Calu3 (cell line): ENCODE measurements at regions of chr2 and their contacts with region 1.

Region 1: DNA sequence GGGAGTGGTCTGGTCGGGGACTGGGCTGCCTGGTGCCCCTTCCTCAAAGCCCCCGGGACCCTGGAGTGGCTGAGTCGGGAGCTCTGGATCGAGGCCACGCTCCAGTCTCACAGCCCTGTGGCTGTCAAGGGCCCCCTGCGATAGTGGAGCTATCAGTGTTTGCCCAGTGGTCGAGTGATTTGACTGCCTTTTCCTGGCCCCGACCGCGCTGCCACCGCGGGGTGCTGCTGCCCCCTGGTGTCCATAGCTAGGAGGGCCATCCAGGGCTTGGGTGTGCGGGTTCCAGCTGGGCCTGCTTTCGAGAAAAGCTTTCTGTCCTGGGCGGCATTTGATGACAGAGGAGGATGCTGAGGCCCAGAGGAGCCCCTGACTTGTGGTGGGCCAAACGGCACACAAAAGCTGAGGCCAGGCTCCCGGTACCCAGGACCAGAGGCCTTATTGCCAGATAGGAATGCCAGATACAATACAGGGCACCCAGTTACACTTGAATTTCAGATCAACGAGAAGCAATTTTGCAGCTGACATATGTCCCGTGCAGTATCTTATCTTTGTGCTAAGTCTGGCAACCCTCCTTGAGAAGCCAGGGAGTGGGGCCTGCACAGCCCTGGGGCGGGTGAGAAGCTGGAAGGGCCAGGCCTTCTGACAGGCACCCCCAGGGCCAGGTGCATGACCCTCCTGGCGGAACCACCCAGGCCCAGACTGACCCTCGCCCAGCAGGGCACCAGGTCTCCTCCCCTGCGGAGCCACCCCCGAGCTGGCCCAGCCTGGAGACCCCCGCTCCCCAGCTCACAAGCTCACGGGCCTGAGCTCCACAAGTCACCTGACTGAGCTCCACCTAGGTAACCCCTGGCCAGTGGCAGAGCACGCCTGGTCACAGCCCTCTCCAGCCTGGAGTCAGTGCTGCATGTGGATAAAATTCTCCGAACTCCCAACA is 13.0 kb downstream of the ODC1 start:
- DNase-seq: peak; percentile 86
- H3K4me3 Mint-ChIP-seq: no peak overlapping the region
- H3K27ac Mint-ChIP-seq: no peak overlapping the region
- H3K4me1 Mint-ChIP-seq: peaks cover 18% of the 10 kb centered on the region
- H3K27me3 Mint-ChIP-seq: no peaks in the 10 kb centered on the region
- CTCF ChIP-seq: peak; percentile 95

Region 2: DNA sequence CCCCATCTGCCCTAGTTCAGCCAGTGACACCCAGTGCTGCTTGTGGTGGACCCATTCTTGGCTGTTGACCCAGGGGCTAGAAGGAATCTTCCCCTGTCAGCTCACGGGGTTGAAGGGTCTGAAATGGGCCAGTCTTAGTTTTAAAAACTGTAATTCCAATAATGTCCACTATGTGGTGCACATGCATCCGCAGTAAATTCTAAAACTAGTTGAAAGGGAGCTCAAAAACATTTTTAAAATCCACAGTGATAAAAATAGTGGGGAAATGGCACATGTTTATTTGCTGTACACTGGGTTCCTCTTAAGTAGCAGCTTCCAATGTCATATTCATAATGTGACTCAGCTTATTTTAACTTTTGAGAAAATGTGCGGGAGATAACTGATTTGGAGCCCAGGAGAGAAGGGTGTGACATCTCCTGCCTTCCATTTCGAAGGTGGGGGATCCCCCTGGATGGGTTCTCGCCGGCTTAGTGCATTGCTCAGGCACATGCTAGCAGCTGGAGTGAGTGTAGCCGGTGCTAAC is 450.9 kb before region 1 on chr2:
- CTCF ChIA-PET with region 1: interaction called, 11 read pairs
- intact Hi-C with region 1: no loop called
- DNase-seq: no peak
- H3K4me3 Mint-ChIP-seq: no peak overlapping the region
- H3K27ac Mint-ChIP-seq: no peak overlapping the region
- H3K4me1 Mint-ChIP-seq: peaks cover 5% of the 10 kb centered on the region
- H3K27me3 Mint-ChIP-seq: no peaks in the 10 kb centered on the region
- CTCF ChIP-seq: peak; percentile 69

Region 3: GRCh38 chr2:10122386-10123280 is 312.5 kb before region 1 on chr2 and contains the start of gene RRM2:
- CTCF ChIA-PET with region 1: interaction called, 35 read pairs
- intact Hi-C with region 1: loop called (anchors 1 kb)
- DNase-seq: peak; percentile 96
- H3K4me3 Mint-ChIP-seq: peak within 1 kb of the TSS; percentile 88
- H3K27ac Mint-ChIP-seq: peak within 1 kb of the TSS; percentile 92
- H3K4me1 Mint-ChIP-seq: peaks cover 26% of the 10 kb centered on the region
- H3K27me3 Mint-ChIP-seq: no peaks in the 10 kb centered on the region
- CTCF ChIP-seq: no peak
- total RNA-seq, gene RRM2: 154 and 168 TPM in 2 replicates

Region 4: DNA sequence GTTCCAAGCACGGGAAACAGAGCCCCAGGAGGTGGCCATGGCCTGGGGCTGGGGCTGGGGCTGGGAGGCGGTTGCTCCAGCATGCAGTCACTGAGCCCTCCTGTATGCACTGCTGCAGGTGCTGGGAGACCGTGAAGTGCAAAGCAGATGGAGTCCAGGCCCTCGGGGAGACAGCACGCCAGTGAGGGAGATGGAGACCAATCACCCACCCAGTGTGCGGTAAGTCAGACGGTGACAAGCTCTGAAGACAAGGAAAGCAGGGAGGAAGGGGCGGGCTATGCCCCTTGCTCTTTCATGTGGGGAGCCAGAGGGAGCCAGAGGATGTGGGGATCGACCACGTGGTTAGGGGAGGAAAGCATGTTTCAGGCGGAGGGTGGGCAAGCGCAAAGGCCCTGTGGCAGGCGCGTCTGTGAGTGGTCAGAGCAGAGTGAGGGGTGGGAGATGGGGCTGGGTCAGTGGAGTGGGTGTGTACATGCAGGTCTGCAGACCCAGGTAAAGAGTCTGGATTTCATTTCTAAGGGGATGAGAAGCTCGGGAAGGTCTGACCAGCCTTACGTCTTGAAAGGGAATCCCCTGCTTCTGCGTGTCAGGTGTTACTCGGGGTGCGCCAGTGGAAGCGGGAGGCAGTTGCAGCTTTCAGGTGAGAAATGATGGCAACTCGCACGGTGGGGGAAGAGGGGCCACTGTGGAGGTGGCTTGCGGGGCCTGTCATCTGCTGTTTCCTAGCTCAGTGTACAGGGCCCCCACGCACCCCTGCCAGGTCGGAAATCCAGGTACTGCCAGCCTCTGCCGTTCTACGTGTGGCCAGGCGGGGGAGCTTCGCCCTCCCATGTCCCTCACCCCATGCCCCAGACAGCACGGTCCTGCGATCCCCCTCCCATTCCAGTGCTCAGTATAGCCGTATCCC is 293.2 kb before region 1 on chr2:
- CTCF ChIA-PET with region 1: interaction called, 13 read pairs
- intact Hi-C with region 1: no loop called
- DNase-seq: peak; percentile 47
- H3K4me3 Mint-ChIP-seq: no peak overlapping the region
- H3K27ac Mint-ChIP-seq: peak overlapping the region; percentile 73
- H3K4me1 Mint-ChIP-seq: peaks cover 9% of the 10 kb centered on the region
- H3K27me3 Mint-ChIP-seq: no peaks in the 10 kb centered on the region
- CTCF ChIP-seq: peak; percentile 55

Region 5: GRCh38 chr2:10269711-10270610 is 165.2 kb before region 1 on chr2:
- CTCF ChIA-PET with region 1: interaction called, 9 read pairs
- intact Hi-C with region 1: loop called (anchors 1 kb)
- DNase-seq: no peak
- H3K4me3 Mint-ChIP-seq: no peak overlapping the region
- H3K27ac Mint-ChIP-seq: no peak overlapping the region
- H3K4me1 Mint-ChIP-seq: peaks cover 8% of the 10 kb centered on the region
- H3K27me3 Mint-ChIP-seq: no peaks in the 10 kb centered on the region
- CTCF ChIP-seq: no peak

Region 6: DNA sequence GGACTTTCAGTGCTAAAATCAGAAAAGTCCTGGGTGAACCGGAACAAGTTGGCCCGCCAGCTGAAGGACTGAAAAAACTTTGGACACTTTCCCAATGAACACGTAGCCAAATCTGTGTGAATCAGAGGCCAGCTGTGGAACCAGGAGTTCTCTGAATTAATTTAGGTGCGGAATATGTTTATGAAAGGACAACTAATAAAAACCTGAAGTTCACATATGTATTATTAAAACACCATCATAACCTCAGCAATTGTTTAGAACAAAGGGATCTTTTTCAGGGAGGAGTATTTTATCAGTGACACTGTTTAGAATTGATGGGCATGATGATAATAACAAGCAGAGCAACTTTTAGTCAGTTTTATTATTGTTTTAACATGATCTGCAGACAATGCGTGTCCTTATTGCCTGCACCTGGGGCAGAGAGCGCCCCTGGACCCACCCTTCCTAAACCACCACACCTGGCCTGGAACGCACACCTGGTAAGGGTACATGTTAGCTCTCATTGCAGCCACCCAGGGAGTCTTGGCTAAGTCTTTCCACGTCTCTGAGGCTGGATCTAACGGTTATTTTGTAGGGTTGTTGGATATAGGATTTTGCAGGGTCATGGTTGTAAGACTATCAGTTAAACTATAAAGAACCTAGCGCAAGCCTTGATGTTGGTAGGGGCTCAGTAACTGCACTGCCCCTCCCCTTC is 22.9 kb after region 1 on chr2:
- CTCF ChIA-PET with region 1: no interaction called
- intact Hi-C with region 1: no loop called
- DNase-seq: no peak
- H3K4me3 Mint-ChIP-seq: no peak overlapping the region
- H3K27ac Mint-ChIP-seq: no peak overlapping the region
- H3K4me1 Mint-ChIP-seq: peaks cover 18% of the 10 kb centered on the region
- H3K27me3 Mint-ChIP-seq: peaks cover 19% of the 10 kb centered on the region
- CTCF ChIP-seq: no peak

Region 7: DNA sequence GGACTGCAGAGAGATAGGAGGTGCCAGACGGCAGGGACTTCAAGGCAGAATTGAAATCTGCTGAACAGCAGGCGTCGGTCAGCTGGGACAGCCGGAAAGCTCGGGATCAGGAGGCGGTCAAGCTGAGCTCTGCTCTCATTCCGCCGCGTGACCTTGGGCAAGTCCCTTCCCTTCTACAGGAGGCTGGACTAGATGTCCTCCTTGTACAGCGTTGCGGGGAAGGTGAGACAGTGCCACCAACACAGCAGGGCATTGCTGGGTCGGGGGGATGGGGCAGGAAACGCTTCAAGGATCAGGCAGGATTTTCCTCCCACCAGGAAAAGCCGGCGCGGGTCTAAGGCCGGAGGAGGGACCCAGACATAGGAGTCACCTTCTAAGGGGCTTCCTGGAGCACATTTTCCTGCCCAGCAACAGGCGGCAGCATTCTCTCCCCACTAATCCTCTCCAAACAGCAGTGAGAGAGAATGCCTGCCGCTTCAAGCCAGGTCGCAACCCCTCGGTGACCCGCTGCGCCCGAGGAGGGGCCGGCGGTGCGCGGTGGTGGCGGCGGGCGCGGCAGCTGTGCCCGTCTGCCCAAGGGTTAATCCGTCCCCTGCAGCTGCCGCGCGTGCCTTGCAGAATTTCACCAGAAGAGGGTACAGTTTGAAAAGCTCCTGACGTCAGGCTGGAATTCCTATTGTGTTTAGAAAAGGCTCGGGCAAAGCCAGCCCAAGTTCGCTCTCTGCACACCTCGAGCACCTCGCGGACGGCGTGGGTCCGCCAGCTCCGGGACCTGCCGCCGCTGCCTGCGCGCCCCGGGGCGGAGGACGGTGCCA is 476.3 kb after region 1 on chr2 and contains the start of gene KCNF1:
- CTCF ChIA-PET with region 1: no interaction called
- intact Hi-C with region 1: no loop called
- DNase-seq: peak; percentile 35
- H3K4me3 Mint-ChIP-seq: peak within 1 kb of the TSS; percentile 6
- H3K27ac Mint-ChIP-seq: no peak within 1 kb of the TSS
- H3K4me1 Mint-ChIP-seq: no peaks in the 10 kb centered on the region
- H3K27me3 Mint-ChIP-seq: peaks cover 97% of the 10 kb centered on the region
- CTCF ChIP-seq: peak; percentile 26
- total RNA-seq, gene KCNF1: not detected in 2 replicates